Heart left ventricle (tissue), 16 donors: ENCODE measurements at regions of chr6 and their contacts with region 1.

Region 1: GRCh38 chr6:152124429-152125074 is 317.1 kb downstream of the ESR1 start:
- DNase-seq: no peak
- ATAC-seq: peak in 3 of 4 donors; percentile 18 to 49 (median 36)
- H3K4me3 ChIP-seq: no peak overlapping the region
- H3K27ac ChIP-seq: no peak overlapping the region
- H3K4me1 ChIP-seq: peaks cover 0 to 45% (median 12%) of the 10 kb centered on the region in 12 donors
- H3K27me3 ChIP-seq: no peaks in the 10 kb centered on the region
- CTCF ChIP-seq: peak; percentile 65 to 88 (median 77)
- POLR2A ChIP-seq: no peak

Region 2: DNA sequence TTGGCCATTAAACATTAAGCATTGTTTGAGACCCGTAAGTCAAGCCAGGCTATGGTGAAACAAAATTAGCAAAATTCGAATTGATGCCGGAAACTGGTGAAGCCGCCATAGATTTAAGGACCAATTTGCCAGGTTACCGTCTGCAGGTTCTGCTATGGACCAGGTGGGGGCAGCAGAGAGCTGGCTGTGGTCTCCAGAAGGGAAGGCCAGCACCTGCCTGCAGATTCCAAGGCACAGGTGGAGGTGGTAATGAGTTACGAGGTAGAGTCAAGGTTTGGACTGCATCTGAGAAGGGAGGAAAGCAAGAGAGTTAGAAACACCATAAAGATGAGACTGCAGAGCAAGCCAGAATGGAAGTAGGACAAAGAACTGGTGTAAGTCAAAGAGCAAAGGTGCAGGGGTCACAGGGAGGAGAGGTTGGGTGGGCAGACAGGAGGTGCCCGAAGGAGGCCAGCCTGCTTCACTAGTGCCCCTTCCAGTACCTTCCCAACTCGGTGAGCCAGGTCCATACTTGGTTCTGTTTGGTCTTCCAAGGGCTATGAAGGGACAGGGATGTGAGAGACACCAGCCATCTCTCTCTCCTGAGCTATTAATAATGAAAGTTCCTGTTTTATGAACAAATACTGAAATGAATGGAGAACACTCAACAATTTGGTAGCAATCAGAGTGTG is 448.7 kb before region 1 on chr6:
- intact Hi-C with region 1: loop called in 7 of 10 experiments (anchors 5 to 10 kb)
- DNase-seq: no peak
- ATAC-seq: peak in 2 of 4 donors; percentile 65 to 66
- H3K4me3 ChIP-seq: no peak overlapping the region
- H3K27ac ChIP-seq: no peak overlapping the region
- H3K4me1 ChIP-seq: peaks cover 0 to 3% (median 0%) of the 10 kb centered on the region in 12 donors
- H3K27me3 ChIP-seq: peaks cover 0 to 3% (median 0%) of the 10 kb centered on the region in 9 donors
- CTCF ChIP-seq: peak; percentile 50 to 84 (median 70)
- POLR2A ChIP-seq: no peak

Region 3: GRCh38 chr6:151681433-151682059 is 443.0 kb before region 1 on chr6:
- intact Hi-C with region 1: loop called in 7 of 10 experiments (anchors 5 to 10 kb)
- DNase-seq: peak in 3 of 5 donors; percentile 14 to 27 (median 25)
- ATAC-seq: peak in 3 of 4 donors; percentile 28 to 57 (median 53)
- H3K4me3 ChIP-seq: peak overlapping the region in 6 of 12 donors; percentile 5 to 43 (median 30)
- H3K27ac ChIP-seq: peak overlapping the region in 11 of 12 donors; percentile 28 to 89 (median 64)
- H3K4me1 ChIP-seq: peaks cover 0 to 17% (median 0%) of the 10 kb centered on the region in 12 donors
- H3K27me3 ChIP-seq: peaks cover 0 to 3% (median 0%) of the 10 kb centered on the region in 9 donors
- CTCF ChIP-seq: no peak
- POLR2A ChIP-seq: no peak

Region 4: DNA sequence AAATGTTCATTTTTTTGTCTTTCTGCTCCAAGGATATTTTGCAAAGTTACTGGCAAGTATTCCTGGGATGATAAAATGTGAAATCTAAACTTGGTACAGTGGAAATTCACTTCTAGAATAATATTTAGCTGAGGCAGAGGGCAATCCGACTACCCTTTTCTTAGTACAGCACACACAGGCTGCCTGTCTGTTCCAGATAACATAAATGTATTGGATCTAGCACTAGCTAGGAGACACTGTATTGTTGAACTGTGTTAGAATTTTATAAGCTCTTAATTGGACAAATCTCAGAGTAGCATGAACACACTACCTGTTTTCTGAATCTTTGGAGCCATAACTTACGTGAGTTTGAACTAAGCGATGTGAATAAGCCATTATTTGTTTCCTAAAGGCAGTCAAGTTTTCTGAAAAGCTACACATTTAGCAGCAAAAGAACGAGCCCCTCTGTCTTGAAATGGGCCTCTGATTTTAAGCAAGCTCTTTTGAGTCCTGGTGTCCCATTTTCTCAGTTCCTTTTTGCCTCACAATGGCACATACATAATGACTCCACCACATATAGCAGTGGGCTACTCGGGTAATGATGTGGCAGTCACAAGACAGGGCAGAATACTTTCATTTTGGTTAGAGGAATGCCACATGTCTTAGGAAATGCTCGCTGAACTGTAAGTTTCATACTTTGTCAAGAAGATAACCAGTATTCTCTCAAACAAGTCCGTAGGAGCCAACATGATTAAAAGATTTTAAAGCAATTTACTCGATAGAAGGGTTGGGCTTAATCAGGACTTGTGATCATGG is 433.6 kb before region 1 on chr6:
- intact Hi-C with region 1: loop called in 5 of 10 experiments (anchors 5 to 10 kb)
- DNase-seq: no peak
- ATAC-seq: peak in 3 of 4 donors; percentile 68 to 80 (median 75)
- H3K4me3 ChIP-seq: peak overlapping the region in 10 of 12 donors; percentile 3 to 57 (median 38)
- H3K27ac ChIP-seq: peak overlapping the region; percentile 13 to 88 (median 70)
- H3K4me1 ChIP-seq: peaks cover 0 to 12% (median 0%) of the 10 kb centered on the region in 12 donors
- H3K27me3 ChIP-seq: no peaks in the 10 kb centered on the region
- CTCF ChIP-seq: no peak
- POLR2A ChIP-seq: no peak

Region 5: GRCh38 chr6:151765444-151765886 is 359.1 kb before region 1 on chr6:
- intact Hi-C with region 1: loop called (anchors 2 to 5 kb)
- DNase-seq: peak in 4 of 5 donors; percentile 27 to 41 (median 32)
- ATAC-seq: peak in 3 of 4 donors; percentile 61 to 65 (median 61)
- H3K4me3 ChIP-seq: no peak overlapping the region
- H3K27ac ChIP-seq: no peak overlapping the region
- H3K4me1 ChIP-seq: peaks cover 0 to 12% (median 1%) of the 10 kb centered on the region in 12 donors
- H3K27me3 ChIP-seq: no peaks in the 10 kb centered on the region
- CTCF ChIP-seq: peak; percentile 58 to 81 (median 73)
- POLR2A ChIP-seq: no peak

Region 6: DNA sequence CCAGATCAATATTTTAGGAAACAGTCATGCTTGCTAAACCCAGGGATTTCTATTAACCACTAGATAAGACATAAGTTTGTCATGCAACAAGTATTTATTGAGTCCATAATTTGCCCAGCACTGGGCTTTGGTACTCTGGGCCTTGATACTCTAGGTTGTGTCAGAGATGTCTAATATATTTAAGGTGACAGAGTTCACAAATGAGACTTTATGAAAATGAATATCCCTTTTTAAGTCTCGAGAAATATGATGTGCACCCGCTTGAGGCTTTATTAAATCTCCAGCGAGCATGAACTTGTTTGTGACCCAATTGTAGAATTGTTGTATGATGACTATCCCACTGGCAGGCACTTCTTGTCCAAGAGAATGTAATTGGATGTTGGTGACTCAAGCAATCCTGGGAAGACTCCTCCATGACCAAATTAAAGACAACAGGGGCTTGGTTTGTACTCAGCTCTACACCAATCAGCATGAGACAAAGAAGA is 207.8 kb before region 1 on chr6:
- intact Hi-C with region 1: no loop called
- DNase-seq: no peak
- ATAC-seq: peak in 2 of 4 donors; percentile 31 to 60
- H3K4me3 ChIP-seq: no peak overlapping the region
- H3K27ac ChIP-seq: peak overlapping the region in 1 of 12 donors; percentile 22
- H3K4me1 ChIP-seq: no peaks in the 10 kb centered on the region
- H3K27me3 ChIP-seq: no peaks in the 10 kb centered on the region
- CTCF ChIP-seq: no peak
- POLR2A ChIP-seq: no peak